Brain microvascular endothelial cell (primary cell): ENCODE measurements at regions of chr1 and their contacts with region 1.

Region 1: DNA sequence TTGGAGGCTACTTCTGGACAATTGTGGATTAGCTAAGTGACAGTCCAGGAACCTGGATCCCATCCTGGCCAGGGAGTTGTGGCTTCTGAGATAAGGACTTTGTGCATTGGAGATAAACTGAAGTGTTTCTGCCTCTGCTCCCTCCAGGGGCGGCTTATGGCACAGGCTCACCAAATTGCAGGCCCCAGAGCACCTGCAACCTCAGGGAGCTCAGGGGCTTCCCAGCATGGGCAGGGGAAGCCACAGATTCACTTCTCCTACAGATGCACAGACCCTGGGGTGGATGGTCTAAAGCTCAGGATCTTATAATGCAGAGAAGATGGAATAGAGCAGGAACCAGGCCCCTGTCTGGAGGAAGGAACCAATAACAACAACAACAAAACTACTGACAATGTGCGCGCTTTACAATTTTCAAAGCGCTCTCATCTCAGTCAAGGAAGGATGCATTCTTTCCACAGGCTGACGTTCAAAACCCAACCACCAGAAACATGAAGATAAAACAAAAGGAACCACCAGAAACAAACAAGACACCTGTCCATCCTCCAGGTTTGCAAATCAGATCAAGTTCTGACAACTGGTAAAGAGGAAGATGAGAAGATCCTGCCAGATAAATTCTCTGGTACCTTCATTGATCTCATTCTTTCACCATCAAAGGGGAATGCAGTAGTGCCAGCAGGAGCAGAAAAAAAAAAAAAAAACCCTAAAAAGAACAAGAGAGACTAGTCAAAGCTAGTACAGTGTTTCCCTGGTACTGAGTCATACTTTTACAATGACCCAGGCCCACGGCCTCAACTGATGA is 121.0 kb upstream of the IRF2BP2 start:
- DNase-seq: peak; percentile 81
- H3K4me3 ChIP-seq: no peak overlapping the region
- H3K27ac ChIP-seq: peak overlapping the region; percentile 99
- H3K27me3 ChIP-seq: no peaks in the 10 kb centered on the region
- CTCF ChIP-seq: no peak

Region 2: GRCh38 chr1:234842726-234843641 is 112.0 kb after region 1 on chr1:
- in situ Hi-C with region 1: loop called (anchors 25 kb)
- DNase-seq: no peak
- H3K4me3 ChIP-seq: no peak overlapping the region
- H3K27ac ChIP-seq: no peak overlapping the region
- H3K27me3 ChIP-seq: no peaks in the 10 kb centered on the region
- CTCF ChIP-seq: no peak

Region 3: DNA sequence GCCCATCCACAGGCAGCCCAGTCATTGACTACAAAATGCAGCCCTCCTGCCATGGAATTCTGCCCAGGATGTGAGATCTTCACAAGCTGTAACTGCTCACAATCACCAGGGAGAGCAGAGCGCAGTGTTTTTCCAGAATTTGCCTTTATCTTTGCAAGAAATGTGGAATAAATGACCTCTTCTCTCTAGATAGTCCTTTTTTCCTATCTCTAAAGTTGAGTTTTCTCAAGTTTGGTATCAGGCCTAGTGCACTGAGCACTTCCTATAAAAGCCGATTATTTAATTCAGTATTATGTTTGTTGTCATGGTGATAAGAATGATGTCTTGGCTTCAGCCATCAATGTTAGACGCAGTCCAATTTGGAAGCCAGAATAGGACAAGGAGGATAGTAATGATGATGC is 125.9 kb after region 1 on chr1:
- in situ Hi-C with region 1: no loop called
- DNase-seq: no peak
- H3K4me3 ChIP-seq: no peak overlapping the region
- H3K27ac ChIP-seq: no peak overlapping the region
- H3K27me3 ChIP-seq: no peaks in the 10 kb centered on the region
- CTCF ChIP-seq: no peak

Region 4: DNA sequence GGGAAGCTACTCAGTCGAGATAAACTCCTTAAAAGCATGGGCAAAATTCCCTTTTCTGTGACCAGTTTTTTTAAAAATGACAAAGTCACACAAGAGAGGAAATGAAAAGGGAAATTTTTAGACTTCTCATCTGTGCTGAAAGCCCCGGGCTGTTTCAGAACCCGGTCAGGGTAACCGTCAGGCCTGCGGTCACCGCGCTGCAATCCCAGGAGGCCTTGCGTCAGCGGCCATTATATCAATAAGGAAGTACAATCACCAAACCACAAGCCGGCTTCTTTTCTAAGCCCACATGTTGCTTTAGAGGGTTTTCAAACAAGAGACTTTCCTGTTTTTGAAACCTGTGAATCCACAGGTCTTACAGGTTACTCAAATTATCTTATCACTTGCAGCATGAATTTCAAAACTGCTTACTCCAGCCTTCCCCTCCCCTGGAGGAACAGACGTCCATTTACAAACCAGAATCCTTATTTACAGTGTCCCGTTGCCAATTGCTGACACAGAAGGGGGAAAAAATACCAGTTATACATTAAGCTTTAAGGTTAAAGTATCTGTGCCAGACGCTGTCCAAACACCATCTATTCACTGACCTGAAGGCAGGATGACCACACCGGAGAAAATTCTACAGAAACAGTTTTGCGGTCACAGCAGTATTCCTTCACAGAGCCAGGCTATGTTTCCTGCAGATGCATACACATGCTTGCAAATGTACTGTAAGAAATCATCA is 232.4 kb after region 1 on chr1:
- in situ Hi-C with region 1: loop called (anchors 25 kb)
- DNase-seq: peak; percentile 97
- H3K4me3 ChIP-seq: no peak overlapping the region
- H3K27ac ChIP-seq: peak overlapping the region; percentile 100
- H3K27me3 ChIP-seq: no peaks in the 10 kb centered on the region
- CTCF ChIP-seq: no peak